ENCODE measurements at regions of chr4 and their contacts with region 1.

Region 1: GRCh38 chr4:154807042-154807630 is 26.1 kb downstream of the RBM46 start:
- DNase-seq: no peak
- H3K4me3 ChIP-seq: no peak overlapping the region
- H3K27ac ChIP-seq: no peak overlapping the region
- H3K4me1 ChIP-seq: no peaks in the 10 kb centered on the region
- H3K27me3 ChIP-seq: no peaks in the 10 kb centered on the region
- CTCF ChIP-seq: peak; percentile 71

Region 2: GRCh38 chr4:154928640-154929257 is 121.6 kb after region 1 on chr4:
- CTCF ChIA-PET with region 1: no interaction called
- POLR2A ChIA-PET with region 1: no interaction called
- intact Hi-C with region 1: loop called (anchors 1 kb)
- DNase-seq: no peak
- H3K4me3 ChIP-seq: no peak overlapping the region
- H3K27ac ChIP-seq: no peak overlapping the region
- H3K4me1 ChIP-seq: no peaks in the 10 kb centered on the region
- H3K27me3 ChIP-seq: no peaks in the 10 kb centered on the region
- CTCF ChIP-seq: peak; percentile 59

Region 3: DNA sequence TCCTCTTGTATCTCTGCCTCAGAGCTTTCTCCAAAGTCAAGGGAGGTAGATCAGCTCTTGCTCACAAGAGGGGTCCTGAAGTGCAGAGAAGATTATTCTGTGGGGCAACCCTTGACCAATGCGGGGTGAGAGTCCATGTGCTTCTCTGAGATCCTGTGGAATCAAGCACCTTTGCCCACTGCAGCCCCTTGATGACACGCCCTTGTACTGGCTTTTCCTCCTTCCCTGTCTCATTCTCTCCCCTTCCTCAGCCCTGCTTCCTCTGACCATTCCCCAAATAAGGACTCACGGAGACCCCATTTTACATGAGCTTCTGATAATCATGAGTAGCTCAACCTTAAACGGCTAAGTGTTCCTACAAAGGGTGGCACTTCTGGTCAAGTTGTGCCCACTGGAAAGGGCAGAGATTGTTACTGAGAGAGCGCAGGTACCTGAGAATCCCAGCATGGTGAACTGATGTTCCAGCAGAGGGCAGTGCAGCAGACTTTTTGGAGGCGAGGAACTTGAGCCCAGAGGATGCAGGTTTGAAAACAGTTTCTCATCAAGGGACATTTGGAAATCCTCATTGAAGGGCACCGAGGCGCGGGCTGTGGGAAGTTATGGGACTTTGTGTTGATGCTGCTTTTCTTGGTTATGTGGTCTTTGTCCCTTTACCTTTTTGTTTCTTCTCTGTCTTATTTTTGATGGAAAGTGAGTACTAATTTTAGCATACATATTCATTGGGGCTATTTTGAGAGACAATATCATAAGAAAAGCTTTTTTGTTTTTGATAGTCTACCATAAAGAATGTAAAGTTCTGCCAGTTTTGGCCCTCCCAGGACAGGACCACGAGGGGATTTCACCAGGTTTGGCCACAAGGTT is 175.3 kb after region 1 on chr4:
- CTCF ChIA-PET with region 1: interaction called, 3 read pairs
- POLR2A ChIA-PET with region 1: no interaction called
- intact Hi-C with region 1: loop called (anchors 5 kb)
- DNase-seq: peak in 1 of 2 experiments; percentile 43
- H3K4me3 ChIP-seq: no peak overlapping the region
- H3K27ac ChIP-seq: no peak overlapping the region
- H3K4me1 ChIP-seq: no peaks in the 10 kb centered on the region
- H3K27me3 ChIP-seq: no peaks in the 10 kb centered on the region
- CTCF ChIP-seq: peak; percentile 60

Region 4: GRCh38 chr4:155299103-155299502 is 492.0 kb after region 1 on chr4:
- CTCF ChIA-PET with region 1: no interaction called
- POLR2A ChIA-PET with region 1: no interaction called
- intact Hi-C with region 1: no loop called
- DNase-seq: no peak
- H3K4me3 ChIP-seq: no peak overlapping the region
- H3K27ac ChIP-seq: no peak overlapping the region
- H3K4me1 ChIP-seq: no peaks in the 10 kb centered on the region
- H3K27me3 ChIP-seq: no peaks in the 10 kb centered on the region
- CTCF ChIP-seq: no peak

Region 5: GRCh38 chr4:155371432-155372043 is 564.4 kb after region 1 on chr4:
- CTCF ChIA-PET with region 1: no interaction called
- POLR2A ChIA-PET with region 1: no interaction called
- intact Hi-C with region 1: loop called (anchors 1 kb)
- DNase-seq: no peak
- H3K4me3 ChIP-seq: no peak overlapping the region
- H3K27ac ChIP-seq: no peak overlapping the region
- H3K4me1 ChIP-seq: peaks cover 10% of the 10 kb centered on the region; the same call in 1 of the 2 replicates
- H3K27me3 ChIP-seq: no peaks in the 10 kb centered on the region
- CTCF ChIP-seq: peak; percentile 71

Region 6: GRCh38 chr4:155787113-155787710 is 980.1 kb after region 1 on chr4:
- CTCF ChIA-PET with region 1: no interaction called
- POLR2A ChIA-PET with region 1: no interaction called
- intact Hi-C with region 1: loop called (anchors 5 kb)
- DNase-seq: peak in 1 of 2 experiments; percentile 11
- H3K4me3 ChIP-seq: no peak overlapping the region
- H3K27ac ChIP-seq: no peak overlapping the region
- H3K4me1 ChIP-seq: no peaks in the 10 kb centered on the region
- H3K27me3 ChIP-seq: no peaks in the 10 kb centered on the region
- CTCF ChIP-seq: peak; percentile 58

Region 7: GRCh38 chr4:155953151-155954114 is 1146.3 kb after region 1 on chr4 and contains the start of gene CTSO:
- CTCF ChIA-PET with region 1: no interaction called
- POLR2A ChIA-PET with region 1: no interaction called
- intact Hi-C with region 1: loop called (anchors 10 kb)
- DNase-seq: peak; percentile 44 to 63
- H3K4me3 ChIP-seq: peak within 1 kb of the TSS; percentile 75
- H3K27ac ChIP-seq: peak within 1 kb of the TSS; percentile 55
- H3K4me1 ChIP-seq: no peaks in the 10 kb centered on the region
- H3K27me3 ChIP-seq: no peaks in the 10 kb centered on the region
- CTCF ChIP-seq: peak; percentile 71
- total RNA-seq, gene CTSO: 4.8 and 5.0 TPM in 2 replicates